BJ (cell line): ENCODE measurements at regions of chr1 and their contacts with region 1.

Region 1: DNA sequence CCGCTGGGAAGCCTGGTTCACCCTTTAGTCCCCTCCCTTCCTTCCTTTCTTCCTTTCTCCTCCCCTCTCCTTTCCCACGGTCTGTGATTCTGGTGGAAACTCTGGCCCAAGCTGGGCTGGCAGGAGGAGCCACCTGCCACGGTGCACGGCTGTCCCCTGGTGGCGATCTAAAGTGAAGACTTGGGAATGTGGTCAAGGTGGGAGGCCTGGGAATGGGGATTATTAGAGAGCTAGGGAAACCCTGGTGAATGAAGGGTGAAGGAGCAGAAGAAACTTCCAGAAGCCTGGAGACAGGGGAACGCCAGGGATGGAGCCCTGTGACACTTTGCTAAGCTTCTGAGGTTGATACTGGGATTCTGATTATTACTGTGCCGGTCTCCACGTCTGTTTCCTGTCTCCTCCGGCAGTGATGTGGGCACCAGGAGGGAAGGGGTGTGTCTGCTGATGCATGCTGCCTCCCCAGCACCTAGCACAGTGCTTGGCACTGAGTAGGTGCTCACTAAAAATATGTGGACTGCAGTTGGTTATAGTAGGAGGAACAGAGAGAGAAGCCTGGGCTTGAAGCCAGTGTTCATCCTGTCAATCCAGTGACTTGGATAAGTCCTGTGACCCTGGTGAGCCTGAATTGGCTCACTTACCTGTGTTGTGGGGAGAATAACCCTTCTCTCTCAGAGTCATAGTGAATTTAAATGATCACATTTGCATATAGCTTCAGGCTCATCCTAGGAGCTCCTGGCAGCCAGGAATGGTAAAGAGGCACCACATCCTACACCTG is 71.2 kb upstream of the NBPF3 start:
- DNase-seq: peak; percentile 24
- H3K4me3 ChIP-seq: no peak overlapping the region
- H3K27me3 ChIP-seq: no peaks in the 10 kb centered on the region
- CTCF ChIP-seq: peak; percentile 100

Region 2: DNA sequence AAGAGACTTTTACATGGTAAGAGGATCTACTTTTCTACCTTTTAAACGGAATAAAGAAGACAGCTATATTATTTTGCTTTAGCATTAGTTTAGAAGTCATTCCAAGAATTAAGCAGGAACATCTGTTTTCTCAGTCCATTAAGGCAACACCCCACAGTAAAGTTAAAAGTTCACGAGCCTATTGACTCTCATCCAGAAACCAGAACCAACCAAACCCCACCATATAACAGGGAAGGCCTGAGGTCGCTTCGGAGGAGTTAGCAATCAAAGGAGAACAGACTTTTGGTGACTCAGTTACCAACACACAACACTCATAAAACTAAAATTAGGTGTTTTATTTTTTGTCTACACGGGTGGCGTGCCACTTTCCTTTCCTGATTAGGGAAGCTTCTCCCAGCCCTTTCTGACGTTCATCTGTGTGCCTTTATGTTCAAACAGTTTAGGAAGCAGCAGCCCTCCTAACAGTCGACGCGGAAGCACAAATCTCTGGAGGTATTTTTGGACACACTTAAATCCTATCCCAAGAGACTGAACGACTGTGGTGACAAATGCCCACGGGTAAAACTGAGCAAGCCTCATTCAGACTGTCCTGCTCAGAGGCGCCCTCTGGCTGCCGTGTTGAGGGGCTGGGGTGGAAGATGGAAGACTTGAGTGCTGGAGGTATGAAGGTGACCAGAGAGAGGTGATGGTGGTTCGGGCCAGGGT is 1173.8 kb before region 1 on chr1:
- CTCF ChIA-PET with region 1: no interaction called
- POLR2A ChIA-PET with region 1: no interaction called
- DNase-seq: no peak
- H3K4me3 ChIP-seq: no peak overlapping the region
- H3K27me3 ChIP-seq: peaks cover 11% of the 10 kb centered on the region
- CTCF ChIP-seq: peak; percentile 92

Region 3: GRCh38 chr1:21200767-21201166 is 167.9 kb before region 1 on chr1:
- CTCF ChIA-PET with region 1: interaction called, 20 read pairs
- POLR2A ChIA-PET with region 1: no interaction called
- DNase-seq: no peak
- H3K4me3 ChIP-seq: no peak overlapping the region
- H3K27me3 ChIP-seq: no peaks in the 10 kb centered on the region
- CTCF ChIP-seq: no peak

Region 4: DNA sequence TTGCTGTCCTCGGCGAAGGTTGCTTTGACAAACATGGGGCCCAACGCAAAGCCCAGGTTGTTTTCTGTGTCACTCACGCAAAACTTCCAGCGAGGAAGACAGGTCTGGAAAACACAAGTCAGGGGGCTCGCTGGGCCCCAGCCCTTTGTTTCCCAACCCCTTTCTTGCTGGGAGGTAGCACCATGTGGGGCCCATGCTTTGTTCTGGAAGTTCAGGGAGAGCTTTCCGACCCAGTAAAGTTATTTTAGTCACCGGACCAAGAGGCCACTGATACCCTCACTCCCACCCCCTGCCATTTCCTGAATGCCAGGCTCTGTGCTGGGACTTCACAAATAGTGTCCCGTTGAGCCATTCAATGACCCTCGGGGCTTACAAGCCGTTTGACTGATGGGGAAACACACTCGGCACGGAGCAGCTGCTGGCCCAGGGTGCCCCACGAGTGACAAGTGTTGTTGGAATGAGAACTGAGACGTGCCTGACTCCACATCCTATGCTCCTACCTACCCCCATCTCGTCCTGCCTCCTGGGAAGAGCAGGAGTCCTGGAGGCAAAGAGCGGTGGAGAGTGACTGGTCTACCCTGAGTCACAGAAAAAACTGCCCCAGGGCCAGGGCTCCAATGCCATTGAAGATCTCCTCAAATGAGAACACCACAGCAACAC is 130.4 kb before region 1 on chr1:
- CTCF ChIA-PET with region 1: interaction called, 162 read pairs
- POLR2A ChIA-PET with region 1: interaction called, 5 read pairs
- DNase-seq: peak; percentile 76
- H3K4me3 ChIP-seq: no peak overlapping the region
- H3K27me3 ChIP-seq: no peaks in the 10 kb centered on the region
- CTCF ChIP-seq: no peak

Region 5: GRCh38 chr1:21344750-21345443 is 23.8 kb before region 1 on chr1:
- CTCF ChIA-PET with region 1: interaction called, 12 read pairs
- POLR2A ChIA-PET with region 1: no interaction called
- DNase-seq: no peak
- H3K4me3 ChIP-seq: peak overlapping the region; percentile 85
- H3K27me3 ChIP-seq: no peaks in the 10 kb centered on the region
- CTCF ChIP-seq: no peak

Region 6: GRCh38 chr1:21468599-21468998 is 99.9 kb after region 1 on chr1:
- CTCF ChIA-PET with region 1: interaction called, 13 read pairs
- POLR2A ChIA-PET with region 1: no interaction called
- DNase-seq: no peak
- H3K4me3 ChIP-seq: no peak overlapping the region
- H3K27me3 ChIP-seq: no peaks in the 10 kb centered on the region
- CTCF ChIP-seq: peak; percentile 52

Region 7: DNA sequence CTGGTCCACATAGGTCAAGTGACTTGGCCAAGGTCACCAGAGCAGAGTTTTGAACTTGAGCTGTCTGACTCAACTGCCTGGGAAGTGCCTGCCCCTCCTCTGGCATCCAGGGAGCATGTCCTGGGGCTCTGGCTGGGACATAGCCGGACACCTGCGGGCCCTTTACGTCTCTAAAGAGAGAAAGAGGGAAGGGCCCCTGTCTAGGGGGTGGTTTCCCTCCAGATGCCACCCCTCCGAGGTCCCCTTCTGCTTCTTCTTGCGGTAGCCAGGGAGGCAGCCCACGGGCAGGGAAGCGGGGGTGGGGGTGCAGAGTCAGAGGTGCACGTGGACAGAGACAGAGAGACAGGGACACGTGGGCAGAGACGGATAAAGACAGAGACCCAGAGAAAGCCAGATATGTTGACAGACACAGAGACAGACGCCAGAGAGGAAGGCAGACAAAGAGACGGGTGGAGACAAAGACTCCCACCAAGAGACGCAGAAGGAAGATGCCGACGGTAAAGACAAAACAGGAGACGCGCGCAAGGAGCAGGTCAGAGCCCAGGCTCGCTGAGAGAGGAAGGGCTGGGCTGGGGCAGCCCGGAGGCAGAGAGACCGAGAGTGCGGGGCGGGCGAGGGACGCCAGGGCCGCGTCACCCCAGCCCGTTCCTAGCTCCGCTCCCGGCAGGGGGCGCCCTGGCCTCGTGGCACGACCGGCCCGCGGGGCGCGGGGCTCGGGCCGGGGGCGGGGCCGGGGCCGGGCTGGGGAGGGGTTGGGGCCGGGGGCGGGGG is 140.1 kb after region 1 on chr1:
- CTCF ChIA-PET with region 1: interaction called, 16 read pairs
- POLR2A ChIA-PET with region 1: no interaction called
- DNase-seq: no peak
- H3K4me3 ChIP-seq: peak overlapping the region; percentile 25
- H3K27me3 ChIP-seq: peaks cover 22% of the 10 kb centered on the region
- CTCF ChIP-seq: peak; percentile 57

Region 8: DNA sequence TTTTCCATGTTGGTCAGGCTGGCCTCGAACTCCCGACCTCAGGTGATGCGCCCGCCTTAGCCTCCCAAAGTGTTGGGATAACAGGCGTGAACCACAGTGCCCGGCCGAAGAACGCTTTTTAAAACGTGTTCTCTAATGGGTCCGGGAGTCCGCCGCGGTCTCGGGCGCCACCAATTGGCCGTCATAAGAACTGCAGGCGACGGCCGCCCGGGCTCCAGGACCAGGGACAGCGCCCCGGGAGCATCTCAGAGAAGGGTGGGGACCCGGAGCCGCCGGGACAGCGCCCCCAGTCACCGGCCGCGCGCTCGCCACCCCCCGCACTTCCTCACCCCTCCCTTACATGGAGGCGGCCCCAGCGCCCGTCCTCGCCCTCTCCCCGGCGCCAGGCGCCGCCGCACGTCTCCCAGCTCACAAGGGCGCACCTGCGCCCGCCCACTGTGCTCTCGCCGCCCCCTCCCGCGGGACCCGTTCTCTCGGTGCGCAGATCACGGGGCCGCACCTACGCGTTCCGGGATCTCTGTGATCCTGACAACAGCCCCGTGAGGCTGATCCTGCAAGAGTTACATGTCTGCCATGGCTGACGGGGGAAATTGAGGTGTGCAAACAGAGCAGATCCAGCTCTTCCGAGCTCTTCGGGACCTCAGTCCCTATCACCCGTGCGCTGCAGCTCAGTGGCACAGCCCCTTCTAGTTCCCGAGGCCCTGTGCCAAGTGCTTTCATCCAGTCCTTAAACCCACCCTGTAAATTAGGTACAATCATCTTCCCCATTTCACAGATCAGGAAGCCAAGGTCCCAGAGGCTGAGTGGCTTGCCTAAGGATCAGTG is 290.6 kb after region 1 on chr1:
- CTCF ChIA-PET with region 1: interaction called, 50 read pairs
- POLR2A ChIA-PET with region 1: no interaction called
- DNase-seq: no peak
- H3K4me3 ChIP-seq: no peak overlapping the region
- H3K27me3 ChIP-seq: peaks cover 12% of the 10 kb centered on the region
- CTCF ChIP-seq: peak; percentile 93